Activated naive CD4-positive, alpha-beta T cell treated with anti-CD3 and anti-CD28 coated beads for 36 hours (primary cell): ENCODE measurements at regions of chr1 and their contacts with region 1.

Region 1: GRCh38 chr1:83860490-83861221 is 138.3 kb downstream of the TTLL7 start:
- DNase-seq: peak; percentile 88
- H3K4me3 Mint-ChIP-seq: peak overlapping the region; percentile 76
- H3K27ac Mint-ChIP-seq: peak overlapping the region; percentile 73
- H3K4me1 Mint-ChIP-seq: peaks cover 12% of the 10 kb centered on the region
- H3K27me3 Mint-ChIP-seq: no peaks in the 10 kb centered on the region

Region 2: GRCh38 chr1:82775402-82776000 is 1085.2 kb before region 1 on chr1:
- CTCF ChIA-PET with region 1: no interaction called
- intact Hi-C with region 1: loop called (anchors 5 kb)
- DNase-seq: peak; percentile 58
- H3K4me3 Mint-ChIP-seq: no peak overlapping the region
- H3K27ac Mint-ChIP-seq: no peak overlapping the region
- H3K4me1 Mint-ChIP-seq: no peaks in the 10 kb centered on the region
- H3K27me3 Mint-ChIP-seq: no peaks in the 10 kb centered on the region

Region 3: GRCh38 chr1:83318366-83318765 is 542.3 kb before region 1 on chr1:
- CTCF ChIA-PET with region 1: no interaction called
- intact Hi-C with region 1: loop called (anchors 10 kb)
- DNase-seq: no peak
- H3K4me3 Mint-ChIP-seq: no peak overlapping the region
- H3K27ac Mint-ChIP-seq: no peak overlapping the region
- H3K4me1 Mint-ChIP-seq: no peaks in the 10 kb centered on the region
- H3K27me3 Mint-ChIP-seq: no peaks in the 10 kb centered on the region

Region 4: GRCh38 chr1:83508485-83509151 is 352.0 kb before region 1 on chr1:
- CTCF ChIA-PET with region 1: interaction called, 4 read pairs
- intact Hi-C with region 1: loop called (anchors 5 kb)
- DNase-seq: peak; percentile 68
- H3K4me3 Mint-ChIP-seq: peak overlapping the region; percentile 46
- H3K27ac Mint-ChIP-seq: peak overlapping the region; percentile 91
- H3K4me1 Mint-ChIP-seq: peaks cover 46% of the 10 kb centered on the region
- H3K27me3 Mint-ChIP-seq: no peaks in the 10 kb centered on the region

Region 5: GRCh38 chr1:83593073-83593472 is 267.6 kb before region 1 on chr1:
- CTCF ChIA-PET with region 1: no interaction called
- intact Hi-C with region 1: loop called (anchors 5 kb)
- DNase-seq: no peak
- H3K4me3 Mint-ChIP-seq: no peak overlapping the region
- H3K27ac Mint-ChIP-seq: no peak overlapping the region
- H3K4me1 Mint-ChIP-seq: peaks cover 15% of the 10 kb centered on the region
- H3K27me3 Mint-ChIP-seq: no peaks in the 10 kb centered on the region